Breast epithelium (tissue), 4 donors: ENCODE measurements at regions of chr3 and their contacts with region 1.

Region 1: GRCh38 chr3:118412503-118412902 is 622.1 kb downstream of the IGSF11 start:
- DNase-seq: no peak
- H3K4me3 ChIP-seq: no peak overlapping the region
- H3K27ac ChIP-seq: no peak overlapping the region
- H3K4me1 ChIP-seq: no peaks in the 10 kb centered on the region
- H3K27me3 ChIP-seq: no peaks in the 10 kb centered on the region
- CTCF ChIP-seq: no peak
- POLR2A ChIP-seq: no peak

Region 2: DNA sequence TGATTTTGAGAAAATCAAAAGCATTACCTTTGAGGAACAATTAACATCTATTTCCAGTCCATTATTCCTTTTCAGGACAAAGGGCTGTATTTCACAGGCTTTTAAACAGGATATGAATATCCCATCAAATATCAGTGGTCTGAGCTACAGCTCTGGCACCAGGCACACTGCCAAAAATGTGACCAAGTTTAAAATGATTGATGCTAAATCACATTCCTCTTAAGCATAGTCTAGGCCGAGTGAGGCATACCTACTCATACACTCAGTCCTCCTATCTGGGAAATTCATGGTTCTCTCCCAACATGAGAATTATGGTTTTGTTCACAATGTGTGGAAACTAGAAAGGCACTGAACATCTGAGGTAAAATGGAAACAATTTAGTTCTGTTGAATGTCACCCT is 1019.4 kb before region 1 on chr3:
- intact Hi-C with region 1: loop called (anchors 5 kb)
- DNase-seq: no peak
- H3K4me3 ChIP-seq: no peak overlapping the region
- H3K27ac ChIP-seq: no peak overlapping the region
- H3K4me1 ChIP-seq: no peaks in the 10 kb centered on the region
- H3K27me3 ChIP-seq: no peaks in the 10 kb centered on the region
- CTCF ChIP-seq: no peak
- POLR2A ChIP-seq: no peak